ENCODE measurements at regions of chr1 and their contacts with region 1.

Region 1: GRCh38 chr1:985126-985525 is 3.2 kb upstream of the PERM1 start:
- DNase-seq: peak in 1 of 4 donors; percentile 34
- ATAC-seq: no peak
- H3K4me3 ChIP-seq: no peak overlapping the region
- H3K27ac ChIP-seq: no peak overlapping the region
- H3K4me1 ChIP-seq: no peaks in the 10 kb centered on the region
- H3K27me3 ChIP-seq: peaks cover 0 to 76% of the 10 kb centered on the region in 2 donors
- CTCF ChIP-seq: no peak

Region 2: GRCh38 chr1:1059494-1060280 is 74.6 kb after region 1 on chr1:
- intact Hi-C with region 1: loop called in 1 of 2 experiments (anchors 5 kb)
- DNase-seq: peak; percentile 41 to 96 (median 82)
- ATAC-seq: peak; percentile 93
- H3K4me3 ChIP-seq: peak overlapping the region; percentile 33 to 51
- H3K27ac ChIP-seq: no peak overlapping the region
- H3K4me1 ChIP-seq: peaks cover 6 to 38% of the 10 kb centered on the region in 2 donors
- H3K27me3 ChIP-seq: peaks cover 33 to 81% of the 10 kb centered on the region in 2 donors
- CTCF ChIP-seq: no peak

Region 3: DNA sequence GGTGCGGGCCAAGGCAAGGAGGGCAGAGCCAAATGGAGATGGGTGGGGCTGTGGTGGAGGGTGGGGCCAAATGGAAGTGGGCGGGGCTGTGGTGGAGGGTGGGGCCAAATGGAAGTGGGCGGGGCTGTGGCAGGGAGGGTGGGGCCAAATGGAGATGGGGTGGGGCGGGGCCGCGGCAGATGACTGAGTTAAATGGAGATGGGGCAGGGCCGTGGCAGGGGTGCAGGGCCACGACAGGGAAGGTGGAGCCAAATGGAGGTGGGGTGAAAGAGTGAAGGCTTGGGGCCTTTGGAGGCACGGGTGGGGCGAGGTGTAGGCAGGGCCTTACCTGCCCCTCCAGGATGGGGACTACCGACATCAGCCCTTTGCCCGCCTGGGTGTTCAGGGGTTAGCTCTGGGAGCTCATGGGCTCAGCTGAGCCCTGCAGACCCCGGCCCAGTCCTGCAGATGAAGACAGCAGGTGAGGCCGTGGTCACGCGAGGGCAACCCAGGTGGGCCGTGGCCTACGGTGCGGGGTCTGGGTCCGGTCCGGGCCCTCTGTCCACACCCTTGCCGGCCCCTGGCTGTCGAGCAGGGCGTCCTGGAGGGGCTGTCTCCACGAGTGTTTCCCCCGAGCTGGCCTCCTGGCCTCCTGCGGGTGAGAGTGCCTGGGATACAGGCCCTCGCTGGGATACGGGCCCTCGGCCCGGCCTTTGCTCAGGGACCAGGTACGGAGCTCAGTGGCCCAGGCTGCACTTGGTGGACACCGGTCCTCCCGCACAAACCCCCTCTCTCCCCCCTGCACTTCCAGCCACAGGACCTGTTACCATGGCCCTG is 106.7 kb after region 1 on chr1:
- intact Hi-C with region 1: no loop called
- DNase-seq: peak in 1 of 4 donors; percentile 30
- ATAC-seq: no peak
- H3K4me3 ChIP-seq: no peak overlapping the region
- H3K27ac ChIP-seq: no peak overlapping the region
- H3K4me1 ChIP-seq: no peaks in the 10 kb centered on the region
- H3K27me3 ChIP-seq: no peaks in the 10 kb centered on the region
- CTCF ChIP-seq: no peak